Endothelial cell of umbilical vein (primary cell): ENCODE measurements at regions of chr2 and their contacts with region 1.

Region 1: DNA sequence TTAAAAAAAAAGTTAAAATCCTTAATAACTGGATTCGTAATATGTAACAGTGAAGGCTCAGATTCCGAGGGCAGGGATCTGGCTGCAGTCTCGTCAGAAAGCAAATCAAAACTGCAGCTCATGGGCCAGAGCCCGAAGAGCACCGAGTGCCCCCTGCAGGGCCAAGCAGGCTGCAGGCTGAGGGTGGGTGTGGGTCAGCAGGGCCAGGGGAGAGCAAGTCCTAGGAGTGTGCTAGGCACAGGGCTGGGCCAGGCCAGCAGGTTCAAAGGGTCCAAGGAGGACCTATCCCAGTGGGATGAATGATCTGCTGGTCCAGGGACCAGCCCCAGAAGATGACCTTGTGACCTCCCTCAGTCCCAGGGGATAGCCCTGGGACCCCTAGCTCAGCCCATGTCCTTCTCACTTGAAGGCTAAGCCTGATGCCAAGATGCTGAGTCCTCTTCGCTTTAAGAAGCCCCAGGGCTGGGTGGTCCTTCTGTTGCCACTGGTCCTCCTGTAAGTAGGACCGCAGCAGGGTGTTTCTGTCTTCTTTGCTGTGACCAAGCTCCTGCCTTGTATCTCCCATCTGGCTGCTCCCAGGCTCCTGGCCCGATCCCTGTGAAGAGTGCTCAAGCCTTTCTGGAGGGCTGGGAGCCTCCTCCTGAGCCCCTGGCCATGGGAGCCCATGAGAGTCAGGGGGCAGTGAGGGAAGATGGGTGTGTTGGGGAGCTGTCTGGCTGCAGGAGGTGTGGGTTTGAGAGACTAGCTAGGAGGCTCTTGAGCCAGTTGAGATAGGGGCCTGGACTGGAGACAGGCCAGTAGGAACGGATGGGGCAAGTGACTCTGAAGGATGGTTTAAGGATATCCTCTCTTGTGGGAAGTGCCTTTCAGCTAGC is 150.7 kb downstream of the DYSF start:
- DNase-seq: no peak
- H3K4me3 ChIP-seq: no peak overlapping the region
- H3K27ac ChIP-seq: peak overlapping the region; percentile 74
- H3K4me1 ChIP-seq: peaks cover 37% of the 10 kb centered on the region
- H3K27me3 ChIP-seq: no peaks in the 10 kb centered on the region
- CTCF ChIP-seq: peak in 1 of 2 donors; percentile 33
- POLR2A ChIP-seq: no peak

Region 2: GRCh38 chr2:71524476-71524875 is 79.6 kb before region 1 on chr2:
- CTCF ChIA-PET with region 1: no interaction called
- POLR2A ChIA-PET with region 1: no interaction called
- dilution Hi-C with region 1: no loop called
- intact Hi-C with region 1: no loop called
- DNase-seq: no peak
- H3K4me3 ChIP-seq: no peak overlapping the region
- H3K27ac ChIP-seq: no peak overlapping the region
- H3K4me1 ChIP-seq: no peaks in the 10 kb centered on the region
- H3K27me3 ChIP-seq: no peaks in the 10 kb centered on the region
- CTCF ChIP-seq: no peak
- POLR2A ChIP-seq: no peak

Region 3: GRCh38 chr2:71592181-71592711 is 11.8 kb before region 1 on chr2:
- CTCF ChIA-PET with region 1: interaction called, 5 read pairs
- POLR2A ChIA-PET with region 1: no interaction called
- dilution Hi-C with region 1: no loop called
- intact Hi-C with region 1: loop called (anchors 1 kb)
- DNase-seq: peak; percentile 64
- H3K4me3 ChIP-seq: no peak overlapping the region
- H3K27ac ChIP-seq: no peak overlapping the region
- H3K4me1 ChIP-seq: peaks cover 4% of the 10 kb centered on the region
- H3K27me3 ChIP-seq: no peaks in the 10 kb centered on the region
- CTCF ChIP-seq: no peak
- POLR2A ChIP-seq: no peak